ENCODE measurements at regions of chr5 and their contacts with region 1.

Region 1: DNA sequence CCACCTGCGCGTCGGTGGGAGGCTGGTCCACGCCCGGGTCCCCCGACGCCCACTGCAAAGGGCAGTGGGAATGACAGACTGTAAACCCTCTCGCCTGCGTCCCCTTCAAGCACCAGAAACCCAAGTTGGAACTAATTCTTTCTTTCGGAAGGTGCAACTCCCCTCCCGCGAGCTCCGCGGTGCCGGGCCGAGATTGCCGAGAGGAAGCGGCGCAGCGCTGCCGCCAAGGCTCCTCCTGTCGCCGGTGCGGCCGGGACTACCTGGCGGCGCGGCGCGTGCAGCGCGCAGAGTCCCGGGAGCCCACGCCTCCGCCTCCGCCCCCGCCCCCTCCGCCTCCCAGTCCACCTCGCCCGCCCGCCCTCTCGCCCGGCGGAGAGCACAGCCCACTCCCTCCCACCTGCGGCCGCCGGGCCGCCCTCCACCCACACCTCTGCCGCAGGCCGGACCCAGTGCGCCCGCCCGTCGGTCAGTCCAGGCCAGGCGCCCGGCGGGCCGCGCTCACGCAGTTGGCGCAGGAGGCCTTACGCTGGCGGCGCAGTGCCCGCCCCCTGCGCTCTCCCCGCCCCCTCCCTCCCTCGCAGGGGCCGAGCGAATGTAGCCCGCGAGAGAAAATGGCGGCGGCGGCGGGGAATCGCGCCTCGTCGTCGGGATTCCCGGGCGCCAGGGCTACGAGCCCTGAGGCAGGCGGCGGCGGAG is at the start of gene MAP3K1:
- DNase-seq: peak; percentile 72 to 84
- ATAC-seq: peak; percentile 74 to 94 (median 87)
- H3K4me3 ChIP-seq: peak within 1 kb of the TSS; percentile 64 to 96 (median 88)
- H3K27ac ChIP-seq: peak within 1 kb of the TSS; percentile 65 to 99 (median 96)
- H3K4me1 ChIP-seq: peaks cover 3 to 39% (median 28%) of the 10 kb centered on the region in 9 donors
- H3K27me3 ChIP-seq: no peaks in the 10 kb centered on the region
- CTCF ChIP-seq: peak in 4 of 9 donors; percentile 30 to 48 (median 45)
- total RNA-seq, gene MAP3K1: 4.6 to 13.3 (median 6.5) TPM

Region 2: GRCh38 chr5:56350598-56351170 is 464.4 kb before region 1 on chr5:
- intact Hi-C with region 1: loop called in 1 of 10 experiments (anchors 10 kb)
- DNase-seq: peak; percentile 73 to 74
- ATAC-seq: peak; percentile 80 to 96 (median 91)
- H3K4me3 ChIP-seq: no peak overlapping the region
- H3K27ac ChIP-seq: peak overlapping the region in 8 of 10 donors; percentile 39 to 79 (median 54)
- H3K4me1 ChIP-seq: peaks cover 0 to 52% (median 37%) of the 10 kb centered on the region in 9 donors
- H3K27me3 ChIP-seq: no peaks in the 10 kb centered on the region
- CTCF ChIP-seq: no peak

Region 3: DNA sequence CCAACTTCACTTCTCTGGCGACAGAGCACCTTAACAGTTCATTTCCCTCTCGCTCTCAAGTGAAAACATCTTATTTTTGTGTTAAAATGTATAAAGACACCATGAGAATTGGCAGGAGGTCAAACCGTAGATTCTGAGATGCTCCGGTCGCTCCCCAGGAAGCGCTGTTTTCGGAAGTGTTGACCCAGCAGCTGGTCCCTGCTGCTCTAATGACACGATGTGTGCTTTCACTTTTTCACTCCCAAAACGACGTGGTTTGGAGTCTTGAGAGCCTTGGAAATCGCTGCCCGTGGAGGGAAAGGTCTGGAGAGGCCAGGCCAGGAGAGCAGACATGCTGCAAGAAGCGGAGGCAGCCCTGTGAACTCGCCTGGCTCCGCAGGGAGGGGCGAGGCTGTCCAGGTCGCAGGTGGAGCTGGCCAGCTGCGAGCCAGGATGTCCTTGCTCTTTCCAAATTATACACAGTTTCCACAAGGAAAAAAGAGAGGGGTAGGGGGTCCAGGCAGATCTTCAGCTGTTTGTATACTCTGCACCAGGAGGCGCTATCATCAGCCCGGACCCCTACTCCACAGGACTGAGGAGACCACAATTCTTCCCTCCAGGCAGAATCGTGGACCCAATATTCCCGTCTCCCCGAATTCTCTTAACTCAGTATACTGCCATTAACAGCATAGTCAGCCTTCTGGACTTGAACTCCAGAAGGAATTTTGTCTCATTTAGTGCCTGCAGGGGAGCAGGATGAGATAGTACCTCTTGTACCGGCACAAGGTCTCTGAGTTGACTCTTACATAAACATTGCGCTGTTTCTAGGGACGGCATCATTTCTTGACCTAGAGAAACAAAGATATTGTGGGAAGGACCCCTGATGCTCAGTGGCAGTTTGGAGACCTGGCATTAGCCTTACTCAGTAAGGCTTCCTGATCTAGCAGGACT is 333.4 kb before region 1 on chr5:
- intact Hi-C with region 1: loop called in 5 of 10 experiments (anchors 2 to 10 kb)
- DNase-seq: peak; percentile 45 to 80
- ATAC-seq: peak; percentile 48 to 75 (median 60)
- H3K4me3 ChIP-seq: peak overlapping the region; percentile 29 to 76 (median 66)
- H3K27ac ChIP-seq: peak overlapping the region; percentile 86 to 99 (median 96)
- H3K4me1 ChIP-seq: peaks cover 0 to 52% (median 16%) of the 10 kb centered on the region in 9 donors
- H3K27me3 ChIP-seq: no peaks in the 10 kb centered on the region
- CTCF ChIP-seq: peak in 7 of 9 donors; percentile 21 to 56 (median 36)

Region 4: DNA sequence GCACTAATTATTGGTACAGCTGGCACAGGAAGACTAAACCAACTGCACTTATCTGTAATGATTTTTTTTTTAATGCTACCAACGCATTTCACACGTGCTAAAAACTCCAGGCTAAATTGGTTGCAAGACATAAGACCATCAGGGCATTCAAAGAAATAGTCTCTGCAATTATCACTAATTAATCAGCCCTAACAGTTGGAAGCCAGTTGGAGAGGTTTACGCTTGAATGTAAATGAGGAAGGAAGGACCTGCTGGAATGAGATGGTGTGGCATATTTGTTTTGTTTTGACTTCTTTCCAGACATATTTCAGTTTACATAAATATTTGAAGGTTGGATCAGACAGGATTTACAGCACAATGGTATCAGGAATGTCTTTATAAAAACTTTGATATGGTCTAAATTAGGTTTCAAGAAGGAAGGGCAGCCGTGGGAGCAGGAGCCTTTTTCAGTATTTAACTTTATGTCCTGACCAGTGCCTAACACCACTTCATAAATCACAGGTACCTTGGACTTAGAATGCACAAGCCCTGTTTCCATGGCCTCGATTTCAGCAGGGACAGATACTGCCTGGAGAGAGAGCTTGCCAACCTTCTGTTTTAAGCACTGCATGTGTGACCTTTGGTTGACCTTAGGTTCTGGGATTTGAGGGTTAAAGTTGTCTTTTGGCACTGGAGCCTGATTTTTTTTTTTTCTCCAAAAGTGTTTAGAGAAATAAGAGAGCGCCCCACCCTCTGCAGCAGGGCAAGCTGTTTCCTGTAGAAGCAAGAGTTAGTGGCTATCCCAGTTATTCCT is 199.6 kb before region 1 on chr5:
- intact Hi-C with region 1: loop called in 2 of 10 experiments (anchors 10 kb)
- DNase-seq: peak in 1 of 2 donors; percentile 13
- ATAC-seq: peak; percentile 71 to 88 (median 77)
- H3K4me3 ChIP-seq: peak overlapping the region in 1 of 10 donors; percentile 9
- H3K27ac ChIP-seq: peak overlapping the region in 9 of 10 donors; percentile 17 to 71 (median 49)
- H3K4me1 ChIP-seq: peaks cover 8 to 27% (median 22%) of the 10 kb centered on the region in 9 donors
- H3K27me3 ChIP-seq: no peaks in the 10 kb centered on the region
- CTCF ChIP-seq: no peak

Region 5: GRCh38 chr5:56696900-56697299 is 118.2 kb before region 1 on chr5:
- intact Hi-C with region 1: loop called in 1 of 10 experiments (anchors 5 kb)
- DNase-seq: peak in 1 of 2 donors; percentile 49
- ATAC-seq: no peak
- H3K4me3 ChIP-seq: no peak overlapping the region
- H3K27ac ChIP-seq: peak overlapping the region in 2 of 10 donors; percentile 7 to 30
- H3K4me1 ChIP-seq: peaks cover 4 to 42% (median 23%) of the 10 kb centered on the region in 9 donors
- H3K27me3 ChIP-seq: no peaks in the 10 kb centered on the region
- CTCF ChIP-seq: no peak

Measured in heart right ventricle (tissue), 16 donors.